Motor neuron (in vitro differentiated cells): ENCODE measurements at regions of chr6 and their contacts with region 1.

Region 1: GRCh38 chr6:15254070-15254841 is 8.4 kb downstream of the JARID2 start:
- ATAC-seq: peak; percentile 31 to 68 (median 54)
- H3K4me3 ChIP-seq: no peak overlapping the region
- H3K27ac ChIP-seq: no peak overlapping the region
- H3K4me1 ChIP-seq: peaks cover 17 to 34% of the 10 kb centered on the region in 2 donors

Region 2: GRCh38 chr6:15464211-15464725 is 210.0 kb after region 1 on chr6:
- in situ Hi-C with region 1: loop called in 1 of 9 experiments (anchors 25 kb)
- ATAC-seq: no peak
- H3K4me3 ChIP-seq: no peak overlapping the region
- H3K27ac ChIP-seq: no peak overlapping the region
- H3K4me1 ChIP-seq: peaks cover 0 to 8% of the 10 kb centered on the region in 2 donors

Region 3: DNA sequence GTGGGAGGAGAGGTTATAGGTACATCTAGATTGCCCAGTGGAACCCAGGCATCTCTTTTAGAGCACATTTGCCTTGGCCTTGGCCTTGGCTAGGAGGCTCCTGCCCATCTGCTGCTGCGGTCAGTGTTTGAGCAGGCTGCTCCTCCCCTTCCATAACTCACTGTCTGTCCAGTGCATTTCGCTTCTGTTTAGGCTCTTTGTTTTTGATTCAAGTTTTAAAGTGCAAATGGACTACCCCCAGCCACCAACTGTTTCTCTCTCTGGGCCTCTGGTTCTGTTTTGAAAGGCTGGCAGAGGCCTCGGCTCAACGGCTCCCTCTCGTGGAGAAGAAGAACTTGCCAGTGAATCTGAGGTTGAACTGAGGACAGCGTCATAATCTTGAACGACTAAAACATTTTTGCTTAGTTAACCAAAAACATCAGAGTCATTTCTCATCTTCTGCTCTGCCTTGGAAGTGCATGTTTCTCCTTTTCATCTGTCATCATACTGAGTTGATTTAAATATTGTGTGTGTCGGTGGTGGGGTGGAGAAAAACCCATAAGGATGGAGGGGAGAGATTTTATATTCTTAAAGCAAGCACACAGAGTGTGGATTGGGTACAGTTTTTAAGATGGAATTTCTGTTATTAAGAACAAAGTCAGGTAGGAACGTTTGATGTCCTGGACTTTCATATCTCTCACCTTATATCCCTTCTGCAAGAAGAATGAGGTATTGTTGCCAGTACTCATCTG is 237.2 kb after region 1 on chr6:
- in situ Hi-C with region 1: loop called in 1 of 9 experiments (anchors 25 kb)
- ATAC-seq: peak; percentile 65 to 95 (median 90)
- H3K4me3 ChIP-seq: no peak overlapping the region
- H3K27ac ChIP-seq: no peak overlapping the region
- H3K4me1 ChIP-seq: peaks cover 24 to 33% of the 10 kb centered on the region in 2 donors

Region 4: GRCh38 chr6:16564436-16564835 is 1310.2 kb after region 1 on chr6:
- in situ Hi-C with region 1: no loop called
- ATAC-seq: peak in 3 of 8 experiments; percentile 83 to 96 (median 94)
- H3K4me3 ChIP-seq: no peak overlapping the region
- H3K27ac ChIP-seq: no peak overlapping the region
- H3K4me1 ChIP-seq: peaks cover 0 to 5% of the 10 kb centered on the region in 2 donors